ENCODE measurements at regions of chr5 and their contacts with region 1.

Region 1: GRCh38 chr5:124718380-124718789 is 28.1 kb downstream of the ZNF608 start:
- DNase-seq: no peak
- H3K4me3 ChIP-seq: peak overlapping the region; percentile 61
- H3K27ac ChIP-seq: peak overlapping the region; percentile 71
- H3K4me1 ChIP-seq: peaks cover 88% of the 10 kb centered on the region
- CTCF ChIP-seq: no peak

Region 2: GRCh38 chr5:124655922-124656511 is 62.4 kb before region 1 on chr5:
- CTCF ChIA-PET with region 1: interaction called, 3 read pairs
- POLR2A ChIA-PET with region 1: interaction called, 22 read pairs
- intact Hi-C with region 1: no loop called
- DNase-seq: peak; percentile 75
- H3K4me3 ChIP-seq: peak overlapping the region; percentile 59
- H3K27ac ChIP-seq: peak overlapping the region; percentile 73
- H3K4me1 ChIP-seq: peaks cover 99% of the 10 kb centered on the region
- CTCF ChIP-seq: no peak

Region 3: GRCh38 chr5:124735169-124735858 is 16.9 kb after region 1 on chr5:
- CTCF ChIA-PET with region 1: interaction called, 3 read pairs
- POLR2A ChIA-PET with region 1: interaction called, 121 read pairs
- intact Hi-C with region 1: no loop called
- DNase-seq: peak; percentile 73
- H3K4me3 ChIP-seq: peak overlapping the region; percentile 85
- H3K27ac ChIP-seq: peak overlapping the region; percentile 97
- H3K4me1 ChIP-seq: peaks cover 96% of the 10 kb centered on the region
- CTCF ChIP-seq: no peak